Endothelial cell of umbilical vein (primary cell): ENCODE measurements at regions of chr9 and their contacts with region 1.

Region 1: DNA sequence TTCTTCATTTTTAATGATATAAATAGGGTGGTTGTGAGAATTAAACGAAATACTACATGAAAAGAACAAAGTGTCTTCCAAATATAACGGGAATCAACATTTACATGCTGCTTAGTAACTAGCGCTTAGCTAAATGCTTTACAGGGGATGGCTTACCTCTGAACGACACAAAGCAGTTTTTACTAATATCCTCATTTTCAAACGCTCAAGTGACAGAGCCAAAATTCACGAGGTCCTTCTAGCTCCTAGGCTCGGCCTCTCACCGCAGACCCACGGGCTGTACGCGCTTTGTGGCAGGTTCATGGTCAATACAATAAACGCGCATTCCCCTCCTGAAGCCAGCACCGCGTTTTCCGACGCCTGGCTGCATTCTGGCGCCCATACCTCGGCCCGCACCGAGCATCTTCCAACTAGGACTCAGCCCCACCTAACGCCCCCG is 442 bp downstream of the ZNF510 start:
- DNase-seq: no peak
- H3K4me3 ChIP-seq: peak overlapping the region; percentile 58 to 95 (median 94)
- H3K27ac ChIP-seq: no peak overlapping the region
- H3K4me1 ChIP-seq: peaks cover 6% of the 10 kb centered on the region
- H3K27me3 ChIP-seq: no peaks in the 10 kb centered on the region
- CTCF ChIP-seq: no peak
- POLR2A ChIP-seq: no peak

Region 2: GRCh38 chr9:96686548-96687335 is 90.7 kb before region 1 on chr9:
- CTCF ChIA-PET with region 1: no interaction called
- POLR2A ChIA-PET with region 1: no interaction called
- dilution Hi-C with region 1: no loop called
- intact Hi-C with region 1: loop called (anchors 5 kb)
- DNase-seq: peak; percentile 65
- H3K4me3 ChIP-seq: peak overlapping the region in 1 of 3 experiments; percentile 26
- H3K27ac ChIP-seq: no peak overlapping the region
- H3K4me1 ChIP-seq: no peaks in the 10 kb centered on the region
- H3K27me3 ChIP-seq: peaks cover 2 to 3% of the 10 kb centered on the region in 2 experiments
- CTCF ChIP-seq: peak; percentile 59 to 76
- POLR2A ChIP-seq: no peak